ENCODE measurements at regions of chr16 and their contacts with region 1.

Region 1: DNA sequence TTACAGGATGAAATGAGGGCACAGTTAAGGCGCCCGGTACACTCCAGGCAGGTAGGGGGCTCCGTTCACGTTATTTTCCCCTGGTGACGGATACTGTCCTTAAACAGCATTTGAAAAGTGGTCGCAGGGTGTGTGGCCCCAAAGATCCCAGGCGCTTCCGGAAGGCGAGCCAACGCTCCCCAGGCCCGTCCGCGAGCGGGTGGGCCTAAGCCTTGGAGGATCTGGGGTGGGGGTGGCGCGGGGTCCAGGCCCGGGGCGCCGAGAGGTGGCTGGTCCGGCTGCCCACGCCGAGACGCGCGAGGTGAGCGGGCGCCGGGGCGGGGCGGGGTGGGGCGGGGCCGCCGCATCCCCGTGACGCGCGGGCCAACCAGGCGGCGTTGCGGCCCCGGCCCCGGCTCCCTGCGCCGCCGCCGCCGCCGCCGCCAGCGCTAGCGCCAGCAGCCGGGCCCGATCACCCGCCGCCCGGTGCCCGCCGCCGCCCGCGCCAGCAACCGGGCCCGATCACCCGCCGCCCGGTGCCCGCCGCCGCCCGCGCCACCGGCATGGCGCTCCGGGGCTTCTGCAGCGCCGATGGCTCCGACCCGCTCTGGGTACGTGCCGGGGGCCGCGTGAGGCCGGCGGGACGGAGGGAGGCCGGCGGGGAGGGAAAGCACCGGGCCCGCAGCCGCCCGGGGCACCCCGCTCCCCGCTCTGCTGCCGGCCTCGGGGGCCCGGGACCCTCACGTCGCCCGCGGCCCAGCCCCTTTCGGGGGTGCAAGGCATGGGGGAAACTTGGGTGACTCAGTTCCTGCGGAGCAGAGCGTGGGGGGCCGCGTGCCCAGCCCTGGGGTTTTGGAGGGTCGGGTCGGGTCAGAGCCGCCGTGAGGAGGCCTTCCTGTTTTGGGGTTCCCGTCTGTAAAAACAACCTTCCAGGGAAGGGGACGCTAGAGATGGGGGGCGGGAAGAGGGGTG is at the start of gene ABCC1:
- DNase-seq: peak; percentile 46 to 70 (median 68)
- ATAC-seq: peak; percentile 71
- H3K4me3 ChIP-seq: peak within 1 kb of the TSS; percentile 72
- H3K4me1 ChIP-seq: peaks cover 35% of the 10 kb centered on the region
- CTCF ChIP-seq: no peak
- total RNA-seq, gene ABCC1: 13.8 to 40.0 (median 25.5) TPM

Region 2: DNA sequence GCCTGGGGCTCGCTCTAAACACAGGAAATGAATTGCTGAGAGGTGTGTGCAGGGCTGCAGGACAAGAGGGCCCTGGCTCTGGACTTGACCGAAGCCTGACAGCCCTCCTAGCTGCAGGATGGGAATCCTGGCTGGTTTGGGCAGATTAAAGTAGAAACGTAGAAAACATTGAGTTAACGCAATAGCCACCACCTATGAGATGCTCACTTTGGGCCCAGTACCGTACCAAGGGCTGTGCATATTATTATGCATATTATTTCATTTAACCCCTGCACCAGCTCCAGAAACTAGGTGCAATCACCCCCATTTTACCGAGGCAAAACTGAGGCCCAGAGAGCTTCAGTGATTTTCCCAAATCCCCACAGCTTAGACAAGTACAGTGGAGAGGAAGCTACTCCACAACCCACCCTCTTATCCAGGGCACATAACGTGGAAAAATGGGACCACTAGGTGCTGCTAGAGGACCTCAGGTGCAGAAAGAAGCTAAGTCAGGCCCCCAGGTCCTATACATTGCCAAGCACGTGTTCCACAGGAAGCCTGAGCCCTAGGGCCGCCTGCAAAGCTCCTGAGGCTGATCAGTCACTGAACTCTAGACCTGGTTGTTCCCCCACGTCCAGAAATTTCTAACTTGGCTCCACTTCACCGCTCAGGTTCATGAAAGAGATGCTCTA is 171.8 kb before region 1 on chr16:
- intact Hi-C with region 1: no loop called
- DNase-seq: peak in 1 of 3 donors; percentile 25
- ATAC-seq: peak; percentile 30
- H3K4me3 ChIP-seq: no peak overlapping the region
- H3K4me1 ChIP-seq: no peaks in the 10 kb centered on the region
- CTCF ChIP-seq: no peak

Region 3: DNA sequence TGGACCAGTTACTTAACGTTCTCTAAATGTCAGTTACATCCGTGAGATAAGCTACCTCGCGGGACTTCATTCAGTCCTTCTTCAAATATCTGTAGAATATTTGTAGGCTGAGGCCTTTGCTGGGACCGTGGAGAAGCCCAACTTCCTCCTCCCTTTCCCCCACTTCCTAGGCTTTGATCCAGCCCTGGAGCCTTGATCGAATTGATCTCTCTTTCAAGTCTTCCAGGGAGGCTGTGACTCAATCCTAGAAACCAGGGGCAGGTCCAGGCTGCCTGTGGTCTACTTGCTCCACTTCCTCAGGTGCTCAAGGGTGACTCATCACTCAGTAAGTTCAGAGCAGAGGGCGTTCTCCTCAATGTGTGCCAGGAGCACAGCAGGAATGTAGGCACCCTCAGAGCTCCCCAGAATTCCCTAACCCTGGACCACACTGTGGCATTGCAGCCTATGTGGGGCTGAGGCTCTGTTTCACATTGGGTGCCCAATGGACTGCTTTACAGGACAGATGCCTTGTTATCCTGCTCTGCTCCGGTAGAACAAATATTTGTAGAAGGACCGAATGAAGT is 49.9 kb before region 1 on chr16:
- intact Hi-C with region 1: loop called in 1 of 2 experiments (anchors 10 kb)
- DNase-seq: peak in 2 of 3 donors; percentile 31 to 35
- ATAC-seq: peak; percentile 99
- H3K4me3 ChIP-seq: no peak overlapping the region
- H3K4me1 ChIP-seq: no peaks in the 10 kb centered on the region
- CTCF ChIP-seq: no peak

Measured in mucosa of descending colon (tissue), 3 donors.